Naive thymus-derived CD8-positive, alpha-beta T cell (primary cell): ENCODE measurements at regions of chr12 and their contacts with region 1.

Region 1: GRCh38 chr12:56224102-56224701 is at the start of gene NABP2:
- DNase-seq: peak; percentile 77 to 94 (median 86)
- ATAC-seq: peak; percentile 75 to 79
- H3K4me3 Mint-ChIP-seq: peak within 1 kb of the TSS; percentile 83 to 100 (median 97)
- H3K27ac Mint-ChIP-seq: peak within 1 kb of the TSS; percentile 71 to 100 (median 98)
- H3K4me1 Mint-ChIP-seq: peaks cover 27 to 53% (median 47%) of the 10 kb centered on the region in 4 donors
- H3K27me3 Mint-ChIP-seq: no peaks in the 10 kb centered on the region
- polyA plus RNA-seq, gene NABP2: 3.5 to 3.9 (median 3.7) TPM

Region 2: GRCh38 chr12:56087220-56087619 is 137.0 kb before region 1 on chr12:
- POLR2A ChIA-PET with region 1: no interaction called
- DNase-seq: no peak
- ATAC-seq: no peak
- H3K4me3 Mint-ChIP-seq: no peak overlapping the region
- H3K27ac Mint-ChIP-seq: no peak overlapping the region
- H3K4me1 Mint-ChIP-seq: peaks cover 0 to 6% (median under 1%) of the 10 kb centered on the region in 4 donors
- H3K27me3 Mint-ChIP-seq: peaks cover 0 to 2% (median 0%) of the 10 kb centered on the region in 5 donors

Region 3: DNA sequence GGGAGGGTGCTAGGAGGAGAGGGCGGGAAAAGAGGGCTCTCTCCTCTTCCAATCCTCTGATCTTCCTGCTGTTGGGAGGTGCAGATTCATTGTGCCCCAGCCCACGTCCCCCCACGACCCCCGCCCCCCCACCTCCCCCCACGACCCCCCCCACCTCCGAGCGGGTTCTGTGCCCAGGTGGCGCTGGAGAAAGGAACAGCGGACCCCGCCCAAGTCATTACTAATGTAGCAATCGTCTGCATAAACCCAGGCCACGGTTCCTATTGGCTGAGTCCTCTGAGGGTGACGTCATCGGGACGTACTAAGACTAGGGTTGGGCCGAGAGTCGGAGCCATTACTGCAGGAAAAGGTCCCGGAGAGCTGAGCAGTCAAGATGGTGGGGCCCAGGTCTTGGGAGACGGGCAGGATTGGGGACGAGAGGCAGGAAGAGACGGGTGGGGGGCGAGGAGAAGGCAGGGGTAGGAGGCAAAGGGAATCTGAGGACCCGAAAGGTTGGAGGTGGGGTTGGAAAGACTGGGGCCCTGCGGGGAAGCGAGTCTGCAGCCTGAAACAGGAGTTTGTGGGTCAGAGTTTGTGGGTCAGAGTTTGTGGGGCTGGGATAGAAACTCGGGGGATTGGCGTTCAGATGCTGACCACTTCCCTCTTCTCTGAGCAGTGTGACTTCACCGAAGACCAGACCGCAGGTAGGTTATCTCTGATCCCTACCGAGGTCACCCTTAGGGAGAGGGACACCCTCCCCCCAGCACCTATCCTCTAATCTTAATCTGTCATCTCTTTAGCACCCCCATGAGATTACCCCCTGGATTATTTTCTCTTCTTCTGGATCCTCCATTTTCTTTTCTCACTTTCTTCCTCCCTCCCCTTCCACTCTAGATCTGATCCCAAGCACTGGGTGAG is 65.9 kb before region 1 on chr12 and contains the start of gene MYL6:
- POLR2A ChIA-PET with region 1: interaction called, 13 read pairs
- DNase-seq: peak; percentile 72 to 97 (median 90)
- ATAC-seq: peak; percentile 85 to 87
- H3K4me3 Mint-ChIP-seq: peak within 1 kb of the TSS; percentile 93 to 99 (median 98)
- H3K27ac Mint-ChIP-seq: peak within 1 kb of the TSS; percentile 95 to 100 (median 98)
- H3K4me1 Mint-ChIP-seq: peaks cover 32 to 54% (median 49%) of the 10 kb centered on the region in 4 donors
- H3K27me3 Mint-ChIP-seq: no peaks in the 10 kb centered on the region
- polyA plus RNA-seq, gene MYL6: 1,813 to 2,533 (median 2,044) TPM

Region 4: GRCh38 chr12:56206457-56207166 is 17.6 kb before region 1 on chr12:
- POLR2A ChIA-PET with region 1: interaction called, 18 read pairs
- DNase-seq: peak in 6 of 10 donors; percentile 8 to 30 (median 26)
- ATAC-seq: peak; percentile 54 to 65
- H3K4me3 Mint-ChIP-seq: no peak overlapping the region
- H3K27ac Mint-ChIP-seq: peak overlapping the region in 6 of 10 donors; percentile 8 to 73 (median 52)
- H3K4me1 Mint-ChIP-seq: peaks cover 1 to 4% (median 3%) of the 10 kb centered on the region in 4 donors
- H3K27me3 Mint-ChIP-seq: no peaks in the 10 kb centered on the region

Region 5: GRCh38 chr12:56258057-56258819 is 34.0 kb after region 1 on chr12 and contains the start of gene ANKRD52:
- POLR2A ChIA-PET with region 1: interaction called, 12 read pairs
- DNase-seq: peak; percentile 64 to 88 (median 81)
- ATAC-seq: peak; percentile 94
- H3K4me3 Mint-ChIP-seq: peak within 1 kb of the TSS; percentile 87 to 94 (median 92)
- H3K27ac Mint-ChIP-seq: peak within 1 kb of the TSS; percentile 83 to 96 (median 92)
- H3K4me1 Mint-ChIP-seq: peaks cover 21 to 28% (median 25%) of the 10 kb centered on the region in 4 donors
- H3K27me3 Mint-ChIP-seq: no peaks in the 10 kb centered on the region
- polyA plus RNA-seq, gene ANKRD52: 7.5 to 11.5 (median 7.9) TPM

Region 6: GRCh38 chr12:56315622-56316473 is 91.6 kb after region 1 on chr12 and contains the start of gene CNPY2:
- POLR2A ChIA-PET with region 1: interaction called, 15 read pairs
- DNase-seq: peak; percentile 86 to 98 (median 93)
- ATAC-seq: peak; percentile 92
- H3K4me3 Mint-ChIP-seq: peak within 1 kb of the TSS; percentile 95 to 100 (median 98)
- H3K27ac Mint-ChIP-seq: peak within 1 kb of the TSS; percentile 96 to 100 (median 98)
- H3K4me1 Mint-ChIP-seq: peaks cover 5 to 18% (median 17%) of the 10 kb centered on the region in 4 donors
- H3K27me3 Mint-ChIP-seq: no peaks in the 10 kb centered on the region
- polyA plus RNA-seq, gene CNPY2: 173 to 196 (median 179) TPM